ENCODE measurements at regions of chr3 and their contacts with region 1.

Region 1: DNA sequence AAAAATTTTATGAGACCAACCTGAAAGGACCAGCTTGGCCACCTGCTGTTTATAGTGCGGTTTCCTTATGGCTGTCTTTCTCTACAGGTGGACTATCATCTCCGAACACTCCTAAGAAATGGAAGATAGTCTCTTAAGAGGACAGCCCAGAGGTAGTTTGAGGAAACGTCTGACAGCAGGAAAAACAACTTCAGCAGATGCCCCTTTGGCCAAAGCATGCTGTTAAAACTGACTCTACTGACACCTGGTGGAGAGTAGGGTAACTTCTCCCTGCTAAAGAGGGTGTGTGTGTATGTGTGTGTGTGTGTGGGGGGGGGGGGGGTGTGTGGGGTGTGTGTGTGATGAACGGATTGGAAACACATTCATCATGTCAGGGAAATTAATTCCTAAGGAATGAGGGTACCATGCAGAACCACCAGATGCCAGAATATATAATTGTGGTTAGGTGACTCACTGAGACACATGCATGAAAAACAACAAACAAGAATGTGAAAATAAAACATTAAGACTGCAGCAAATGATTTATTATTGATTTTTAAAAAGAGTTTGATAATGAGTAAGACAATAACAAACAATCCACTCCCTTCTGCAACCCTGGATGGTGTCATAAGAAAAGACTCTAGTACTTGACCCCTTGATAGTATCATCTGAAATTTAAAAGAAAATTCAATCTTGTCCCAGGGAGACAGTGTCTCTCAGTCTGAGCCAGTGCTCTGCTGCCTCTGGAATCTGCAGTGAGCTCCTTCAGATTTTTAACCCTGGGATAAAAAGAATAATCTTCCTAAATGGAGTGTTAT is 256.5 kb downstream of the THRB start:
- DNase-seq: peak; percentile 65 to 78
- ATAC-seq: peak; percentile 83 to 92
- H3K4me3 ChIP-seq: no peak overlapping the region
- H3K27ac ChIP-seq: peak overlapping the region; percentile 11 to 53; a peak in 4 of 6 replicates
- H3K4me1 ChIP-seq: peaks cover 43% of the 10 kb centered on the region
- CTCF ChIP-seq: peak; percentile 85
- EP300 ChIP-seq: no peak
- POLR2A ChIP-seq: no peak
- RAD21 ChIP-seq: peak; percentile 90 to 93

Region 2: DNA sequence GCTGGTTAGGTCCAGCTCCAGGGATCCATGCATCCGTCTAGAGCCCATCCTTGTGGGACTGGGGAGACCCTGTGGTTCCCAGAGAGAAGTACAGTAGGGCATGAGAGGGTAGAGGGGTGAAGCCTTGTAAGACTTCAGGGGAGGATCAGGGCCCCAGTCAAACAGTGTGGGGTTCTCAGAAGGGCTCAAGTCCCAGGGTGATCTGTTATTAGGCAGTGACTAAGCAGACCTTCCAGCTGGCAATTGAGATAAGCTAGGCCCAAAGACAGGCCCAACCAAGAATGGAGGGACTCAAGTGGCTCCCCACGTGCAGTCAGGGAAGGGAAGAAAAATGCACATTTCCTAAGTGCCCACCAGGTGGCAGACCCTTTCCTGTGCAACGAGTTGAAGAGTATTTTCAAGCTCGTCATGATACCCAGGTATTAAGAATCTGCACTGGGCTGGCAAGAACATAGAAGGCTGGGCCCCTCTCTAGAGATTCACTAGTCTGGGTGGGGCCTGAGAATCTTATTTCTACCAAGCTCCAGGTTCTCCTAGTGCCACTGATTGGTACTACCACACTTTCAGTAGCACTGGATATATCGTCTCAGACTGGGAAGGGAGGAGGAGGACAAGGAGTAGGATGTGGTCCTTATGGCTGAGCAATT is 52.3 kb before region 1 on chr3:
- CTCF ChIA-PET with region 1: interaction called, 13 read pairs
- POLR2A ChIA-PET with region 1: no interaction called
- DNase-seq: peak; percentile 36 to 74
- ATAC-seq: peak; percentile 85 to 92
- H3K4me3 ChIP-seq: no peak overlapping the region
- H3K27ac ChIP-seq: peak overlapping the region in 1 of 2 experiments; percentile 46; a peak in 2 of 6 replicates
- H3K4me1 ChIP-seq: no peaks in the 10 kb centered on the region
- CTCF ChIP-seq: peak; percentile 67
- EP300 ChIP-seq: no peak
- POLR2A ChIP-seq: no peak
- RAD21 ChIP-seq: peak; percentile 70 to 74

Region 3: GRCh38 chr3:24225385-24225950 is 12.7 kb before region 1 on chr3:
- CTCF ChIA-PET with region 1: interaction called, 25 read pairs
- POLR2A ChIA-PET with region 1: no interaction called
- DNase-seq: no peak
- ATAC-seq: no peak
- H3K4me3 ChIP-seq: no peak overlapping the region
- H3K27ac ChIP-seq: no peak overlapping the region
- H3K4me1 ChIP-seq: peaks cover 11% of the 10 kb centered on the region
- CTCF ChIP-seq: no peak
- EP300 ChIP-seq: no peak
- POLR2A ChIP-seq: no peak
- RAD21 ChIP-seq: no peak

Region 4: DNA sequence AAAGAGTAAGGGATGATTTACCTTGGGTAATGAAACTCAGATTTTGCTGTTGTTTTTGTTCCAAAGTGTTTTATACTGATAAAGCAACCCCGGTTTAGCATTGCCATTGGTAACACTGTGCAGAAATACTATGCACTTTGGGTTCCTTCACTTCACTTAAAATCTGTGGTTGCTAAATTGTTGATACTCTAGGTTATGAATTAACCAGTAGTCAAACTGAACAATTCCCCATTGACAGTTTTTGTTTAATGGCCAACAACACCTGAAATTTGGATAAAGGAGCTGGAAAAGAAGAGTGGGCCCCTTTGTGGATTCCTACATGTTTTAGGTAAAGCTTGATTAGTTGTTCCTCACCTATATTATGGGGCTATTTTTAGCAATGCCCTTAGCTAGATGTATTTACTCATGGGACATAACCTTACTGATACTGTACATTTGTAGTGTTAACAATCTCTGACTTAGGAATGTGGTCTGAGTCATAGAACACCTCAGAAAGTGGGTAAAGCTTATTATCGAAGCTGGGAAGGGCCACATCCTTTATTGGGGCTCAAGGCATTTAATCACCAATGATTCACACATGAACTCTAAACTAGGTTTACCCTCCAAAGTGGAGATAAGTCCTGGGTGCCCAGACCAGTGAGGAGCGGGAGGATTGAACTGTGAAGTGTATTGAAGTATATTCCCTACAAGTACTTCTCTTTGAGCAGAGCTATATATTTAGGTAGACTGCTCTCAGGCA is 286.0 kb after region 1 on chr3:
- CTCF ChIA-PET with region 1: no interaction called
- POLR2A ChIA-PET with region 1: interaction called, 12 read pairs
- DNase-seq: no peak
- ATAC-seq: no peak
- H3K4me3 ChIP-seq: no peak overlapping the region
- H3K27ac ChIP-seq: no peak overlapping the region
- H3K4me1 ChIP-seq: peaks cover 20% of the 10 kb centered on the region
- CTCF ChIP-seq: no peak
- EP300 ChIP-seq: no peak
- POLR2A ChIP-seq: no peak
- RAD21 ChIP-seq: no peak